SK-N-SH (cell line): ENCODE measurements at regions of chr10 and their contacts with region 1.

Region 1: GRCh38 chr10:29496341-29497162 is 138.2 kb downstream of the SVIL start:
- DNase-seq: peak; percentile 84
- H3K4me3 ChIP-seq: no peak overlapping the region; a peak in 1 of 4 replicates
- H3K27ac ChIP-seq: peak overlapping the region in 1 of 2 experiments; percentile 21; a peak in 1 of 4 replicates
- H3K4me1 ChIP-seq: peaks cover 0 to 7% of the 10 kb centered on the region in 2 experiments; a peak in 2 of 4 replicates
- H3K27me3 ChIP-seq: no peaks in the 10 kb centered on the region
- CTCF ChIP-seq: peak; percentile 99
- EP300 ChIP-seq: no peak
- RAD21 ChIP-seq: peak; percentile 84

Region 2: DNA sequence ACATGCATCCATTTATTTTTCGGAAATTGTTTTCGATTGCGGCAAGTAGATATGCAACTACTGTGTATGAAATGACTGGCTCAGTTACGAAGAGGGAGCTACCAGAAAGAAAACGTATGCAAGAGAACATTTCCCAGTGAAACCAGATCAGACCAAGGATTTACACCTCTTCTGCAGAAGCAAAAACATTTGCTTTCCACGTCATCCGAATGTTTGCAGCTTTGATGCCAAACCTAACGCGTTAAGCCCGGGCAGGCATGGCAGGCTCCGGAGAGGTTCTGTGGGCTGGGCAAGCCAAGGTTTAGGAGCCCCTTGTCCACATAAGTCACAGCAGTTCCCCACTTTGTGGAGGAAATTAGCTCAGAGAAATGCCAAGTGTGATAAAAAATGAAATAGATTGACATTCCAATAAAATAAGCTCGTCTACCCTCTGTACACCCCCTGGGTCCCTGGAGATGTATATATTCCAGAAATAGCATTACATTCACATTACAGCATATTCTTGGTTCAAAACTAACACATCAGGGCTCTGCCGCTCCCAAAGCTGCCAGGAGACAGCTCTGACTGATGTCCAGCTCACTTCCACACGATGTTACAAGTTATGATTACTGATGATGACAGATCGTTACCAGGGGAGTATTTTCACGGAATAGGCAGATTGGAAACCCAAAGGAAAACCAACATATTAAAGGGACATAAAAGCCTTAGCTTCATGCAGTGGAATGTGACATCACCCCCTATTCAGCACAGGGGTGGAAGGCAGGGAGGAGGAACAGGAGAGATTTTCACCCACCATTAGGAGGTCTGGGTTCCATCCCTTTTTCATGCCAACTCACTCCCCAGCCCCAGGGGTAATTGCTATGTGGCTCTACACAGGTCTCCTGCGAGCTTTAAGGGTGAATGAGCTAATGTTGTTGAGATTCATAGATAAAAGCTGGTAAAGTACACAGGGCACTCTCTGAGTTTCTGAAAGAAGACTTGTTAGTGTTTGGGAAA is 126.2 kb before region 1 on chr10:
- CTCF ChIA-PET with region 1: interaction called, 17 read pairs
- POLR2A ChIA-PET with region 1: no interaction called
- DNase-seq: peak; percentile 73
- H3K4me3 ChIP-seq: no peak overlapping the region
- H3K27ac ChIP-seq: no peak overlapping the region
- H3K4me1 ChIP-seq: peaks cover 0 to 7% of the 10 kb centered on the region in 2 experiments; a peak in 2 of 4 replicates
- H3K27me3 ChIP-seq: peaks cover 34% of the 10 kb centered on the region
- CTCF ChIP-seq: no peak
- EP300 ChIP-seq: no peak
- RAD21 ChIP-seq: no peak

Region 3: GRCh38 chr10:29392376-29393021 is 104.1 kb before region 1 on chr10:
- CTCF ChIA-PET with region 1: interaction called, 13 read pairs
- POLR2A ChIA-PET with region 1: no interaction called
- DNase-seq: peak; percentile 75
- H3K4me3 ChIP-seq: no peak overlapping the region; a peak in 1 of 4 replicates
- H3K27ac ChIP-seq: no peak overlapping the region
- H3K4me1 ChIP-seq: no peaks in the 10 kb centered on the region; a peak in 1 of 4 replicates
- H3K27me3 ChIP-seq: peaks cover 23% of the 10 kb centered on the region; the same call in 1 of the 2 replicates
- CTCF ChIP-seq: peak; percentile 84
- EP300 ChIP-seq: no peak
- RAD21 ChIP-seq: peak; percentile 74

Region 4: DNA sequence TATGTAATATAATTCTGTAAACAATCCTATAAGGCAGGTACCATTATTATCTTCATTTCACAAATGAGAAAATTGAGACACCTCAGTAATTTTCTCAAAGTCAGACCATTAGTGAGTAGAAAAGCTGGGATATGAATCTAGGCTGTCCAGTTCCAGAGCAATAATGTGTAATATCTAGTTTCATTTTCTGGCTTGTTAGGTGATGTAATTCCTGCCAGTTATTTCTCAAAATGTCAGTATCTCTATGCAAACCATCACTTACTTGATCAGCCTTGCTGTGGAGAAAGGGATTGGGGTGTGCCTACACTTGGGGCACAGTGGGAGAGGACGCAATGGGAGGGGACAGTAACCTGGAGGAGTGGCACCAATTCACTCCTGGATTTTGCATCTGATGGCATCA is 50.2 kb before region 1 on chr10:
- CTCF ChIA-PET with region 1: interaction called, 18 read pairs
- POLR2A ChIA-PET with region 1: no interaction called
- DNase-seq: no peak
- H3K4me3 ChIP-seq: no peak overlapping the region
- H3K27ac ChIP-seq: no peak overlapping the region
- H3K4me1 ChIP-seq: peaks cover 0 to 2% of the 10 kb centered on the region in 2 experiments; a peak in 2 of 4 replicates
- H3K27me3 ChIP-seq: no peaks in the 10 kb centered on the region
- CTCF ChIP-seq: no peak
- EP300 ChIP-seq: no peak
- RAD21 ChIP-seq: no peak

Region 5: DNA sequence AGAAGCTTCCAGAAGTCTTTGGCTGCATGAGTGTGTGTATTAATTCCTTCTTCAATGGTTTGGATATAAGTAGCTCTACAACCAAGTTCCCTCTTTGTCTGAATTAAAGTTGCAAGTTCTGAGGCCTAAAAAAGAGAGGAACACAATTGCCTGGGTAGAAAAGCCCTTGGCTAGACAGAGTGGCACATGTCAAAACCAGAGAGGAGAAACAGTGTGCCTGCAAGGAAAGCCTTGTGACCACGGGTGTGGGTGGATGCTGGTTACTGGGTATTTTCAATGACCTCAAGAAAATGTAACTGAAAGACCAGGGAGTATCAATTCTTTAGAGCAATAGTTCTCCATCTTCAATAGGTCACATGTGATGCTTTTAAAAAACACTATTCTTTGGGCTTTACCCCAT is 10.1 kb before region 1 on chr10:
- CTCF ChIA-PET with region 1: interaction called, 11 read pairs
- POLR2A ChIA-PET with region 1: no interaction called
- DNase-seq: no peak
- H3K4me3 ChIP-seq: no peak overlapping the region
- H3K27ac ChIP-seq: no peak overlapping the region
- H3K4me1 ChIP-seq: peaks cover 6 to 22% of the 10 kb centered on the region in 2 experiments; a peak in 3 of 4 replicates
- H3K27me3 ChIP-seq: no peaks in the 10 kb centered on the region
- CTCF ChIP-seq: no peak
- EP300 ChIP-seq: no peak
- RAD21 ChIP-seq: no peak